Calu3 (cell line): ENCODE measurements at regions of chr15 and their contacts with region 1.

Region 1: GRCh38 chr15:58331903-58332675 is 99.7 kb upstream of the LIPC start:
- DNase-seq: peak; percentile 98
- H3K4me3 Mint-ChIP-seq: peak overlapping the region; percentile 51
- H3K27ac Mint-ChIP-seq: peak overlapping the region; percentile 99
- H3K4me1 Mint-ChIP-seq: peaks cover 58% of the 10 kb centered on the region
- H3K27me3 Mint-ChIP-seq: no peaks in the 10 kb centered on the region
- CTCF ChIP-seq: no peak

Region 2: DNA sequence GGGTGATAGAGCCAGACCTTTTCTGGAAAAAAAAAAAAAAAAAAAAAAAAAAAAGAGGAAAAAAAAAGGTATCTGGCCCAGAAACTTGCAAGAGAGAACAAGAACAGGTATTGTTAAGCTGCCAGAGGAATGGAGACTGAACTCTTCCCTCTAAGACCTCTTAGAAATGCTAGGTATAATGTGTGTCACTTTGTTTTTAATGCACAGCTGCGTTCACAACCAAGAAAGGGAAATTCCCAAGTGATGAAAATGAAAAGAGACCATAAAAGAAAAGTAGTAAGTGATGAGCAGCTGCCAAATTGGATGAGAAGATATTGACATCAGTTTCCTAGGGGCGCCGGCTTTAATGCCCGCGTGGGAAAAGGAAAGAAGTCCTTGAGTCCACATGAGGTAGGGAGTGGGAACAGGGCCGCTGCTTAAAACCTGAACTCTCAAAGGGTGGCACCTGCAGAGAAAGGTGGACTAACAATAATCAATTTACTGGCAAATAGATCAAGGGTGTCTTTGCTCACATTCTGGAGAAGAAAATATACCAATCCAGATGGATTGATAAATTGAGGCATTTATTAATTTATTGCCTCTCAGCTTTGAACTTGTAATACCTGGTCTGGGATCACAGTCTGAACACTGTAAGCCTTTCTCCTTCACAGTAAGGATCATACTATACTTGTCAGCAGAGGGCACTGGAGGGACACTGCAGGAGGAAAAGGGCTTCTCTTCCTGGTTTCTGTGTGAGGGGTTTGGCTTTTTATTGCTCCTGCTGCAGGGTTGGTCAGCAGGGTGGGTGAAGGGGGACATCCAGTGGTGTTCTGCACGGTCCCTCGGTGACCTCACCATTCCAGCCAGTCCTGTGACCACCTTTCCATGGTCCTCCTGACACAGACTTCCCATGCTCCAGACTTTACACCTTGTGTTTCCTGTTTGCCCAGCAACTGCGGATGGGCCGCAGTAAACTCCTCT is 62.4 kb before region 1 on chr15:
- CTCF ChIA-PET with region 1: interaction called, 5 read pairs
- intact Hi-C with region 1: loop called (anchors 5 kb)
- DNase-seq: peak; percentile 76
- H3K4me3 Mint-ChIP-seq: no peak overlapping the region
- H3K27ac Mint-ChIP-seq: peak overlapping the region; percentile 42
- H3K4me1 Mint-ChIP-seq: peaks cover 18% of the 10 kb centered on the region
- H3K27me3 Mint-ChIP-seq: no peaks in the 10 kb centered on the region
- CTCF ChIP-seq: peak; percentile 74

Region 3: DNA sequence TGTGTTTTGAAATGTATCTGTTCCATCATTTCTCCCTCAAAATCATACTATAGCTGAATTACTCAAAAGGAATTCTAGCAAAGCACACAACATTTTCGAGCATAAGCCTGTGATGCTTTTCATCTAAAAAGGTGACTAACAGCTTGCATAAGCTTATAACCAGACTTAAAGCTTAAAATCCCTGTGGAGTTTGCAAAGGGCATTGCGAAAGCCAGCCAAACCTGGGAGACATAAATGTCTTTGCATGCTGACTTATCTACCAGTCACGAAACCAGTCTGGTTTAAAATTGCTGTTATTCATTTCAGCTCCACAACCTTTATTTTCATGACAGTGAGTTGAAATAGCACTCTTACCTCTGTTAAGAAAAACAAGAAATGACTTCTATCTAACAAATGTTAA is 64.1 kb after region 1 on chr15:
- CTCF ChIA-PET with region 1: interaction called, 3 read pairs
- intact Hi-C with region 1: loop called (anchors 2 kb)
- DNase-seq: no peak
- H3K4me3 Mint-ChIP-seq: no peak overlapping the region
- H3K27ac Mint-ChIP-seq: no peak overlapping the region
- H3K4me1 Mint-ChIP-seq: peaks cover 23% of the 10 kb centered on the region
- H3K27me3 Mint-ChIP-seq: no peaks in the 10 kb centered on the region
- CTCF ChIP-seq: no peak

Region 4: GRCh38 chr15:58440158-58440910 is 108.2 kb after region 1 on chr15:
- CTCF ChIA-PET with region 1: interaction called, 9 read pairs
- intact Hi-C with region 1: loop called (anchors 2 kb)
- DNase-seq: peak; percentile 68
- H3K4me3 Mint-ChIP-seq: peak overlapping the region; percentile 30
- H3K27ac Mint-ChIP-seq: peak overlapping the region; percentile 76
- H3K4me1 Mint-ChIP-seq: peaks cover 78% of the 10 kb centered on the region
- H3K27me3 Mint-ChIP-seq: no peaks in the 10 kb centered on the region
- CTCF ChIP-seq: no peak

Region 5: DNA sequence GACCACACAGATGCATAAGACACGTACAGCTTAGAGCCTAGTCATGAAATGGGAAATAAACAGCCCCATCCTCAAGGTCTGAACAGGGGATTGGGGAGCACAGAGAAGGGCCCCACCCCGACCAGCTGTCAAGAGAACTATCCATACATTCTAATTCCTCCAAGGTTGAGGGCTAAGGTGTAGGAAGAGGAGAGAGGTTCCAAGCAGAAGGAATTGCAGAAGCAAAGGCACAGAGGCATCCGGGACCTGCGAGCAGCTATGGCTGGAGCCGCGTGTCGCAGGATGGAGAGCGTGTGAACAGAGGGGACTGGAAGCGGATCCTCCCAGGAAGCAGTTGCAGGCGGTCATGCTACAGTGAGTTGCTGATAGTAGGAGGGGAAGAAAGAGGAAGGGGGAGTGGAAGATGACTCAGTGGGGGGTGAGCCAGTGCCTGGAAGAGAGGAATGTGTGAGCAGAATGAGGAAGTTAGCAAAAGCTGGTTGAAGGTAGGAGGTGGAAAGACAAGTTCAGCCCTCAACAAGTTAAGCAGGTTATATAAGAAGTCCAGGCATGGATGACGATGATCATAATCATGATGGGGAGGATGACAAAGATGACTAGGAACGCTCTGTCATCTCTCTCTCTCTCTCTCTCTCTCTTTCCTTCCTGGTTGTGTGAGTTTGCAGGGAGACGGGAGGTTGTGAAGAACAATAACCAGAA is 189.4 kb after region 1 on chr15:
- CTCF ChIA-PET with region 1: no interaction called
- intact Hi-C with region 1: loop called (anchors 5 kb)
- DNase-seq: peak; percentile 90
- H3K4me3 Mint-ChIP-seq: peak overlapping the region; percentile 57
- H3K27ac Mint-ChIP-seq: peak overlapping the region; percentile 96
- H3K4me1 Mint-ChIP-seq: peaks cover 62% of the 10 kb centered on the region
- H3K27me3 Mint-ChIP-seq: no peaks in the 10 kb centered on the region
- CTCF ChIP-seq: no peak

Region 6: GRCh38 chr15:58604455-58604925 is 272.4 kb after region 1 on chr15:
- CTCF ChIA-PET with region 1: no interaction called
- intact Hi-C with region 1: loop called (anchors 2 kb)
- DNase-seq: peak; percentile 72
- H3K4me3 Mint-ChIP-seq: peak overlapping the region; percentile 51
- H3K27ac Mint-ChIP-seq: peak overlapping the region; percentile 90
- H3K4me1 Mint-ChIP-seq: peaks cover 69% of the 10 kb centered on the region
- H3K27me3 Mint-ChIP-seq: no peaks in the 10 kb centered on the region
- CTCF ChIP-seq: no peak